ENCODE measurements at regions of chr1 and their contacts with region 1.

Region 1: DNA sequence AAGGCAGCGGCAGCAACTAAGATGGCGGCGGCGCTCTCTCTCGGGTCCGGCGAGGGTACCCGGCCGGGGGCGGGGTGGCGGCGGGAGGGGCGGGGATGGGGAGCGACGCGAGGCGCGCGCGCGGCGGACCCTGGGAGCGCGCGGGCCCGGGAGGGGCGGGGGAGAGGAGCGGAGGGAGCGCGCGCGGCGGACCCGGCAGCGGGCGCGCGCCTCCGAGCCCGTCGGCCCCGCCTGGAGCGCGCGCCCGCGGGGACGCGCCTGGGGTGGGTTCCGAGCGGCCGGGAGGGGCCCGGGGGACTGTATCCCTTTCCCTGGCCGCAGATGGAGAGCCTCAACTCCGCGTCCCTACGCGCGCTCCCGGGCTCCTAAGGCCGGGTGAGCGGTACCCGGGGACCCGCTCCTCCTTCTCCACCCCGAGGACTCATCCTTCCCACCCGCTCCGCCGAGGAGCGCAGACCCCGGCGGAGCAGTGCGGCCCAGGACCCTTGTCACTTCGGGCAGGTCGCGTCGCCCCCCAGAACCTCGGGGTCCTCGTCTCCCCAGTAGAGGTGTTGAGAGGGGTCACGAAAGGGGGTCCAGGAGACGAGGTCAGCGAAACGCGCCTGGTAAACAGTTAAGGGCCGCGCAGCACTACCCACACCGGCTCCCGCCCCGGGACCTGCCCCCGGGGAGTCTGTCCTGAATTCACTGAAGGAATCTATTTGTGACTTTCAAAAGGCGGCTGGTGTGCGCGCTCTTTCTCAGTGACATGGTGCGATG is at the start of gene CLSTN1:
- DNase-seq: peak; percentile 90
- ATAC-seq: peak; percentile 79
- H3K4me3 ChIP-seq: peak within 1 kb of the TSS; percentile 71 to 86 (median 77)
- H3K4me3 Mint-ChIP-seq: peak within 1 kb of the TSS; percentile 95
- H3K27ac ChIP-seq: peak within 1 kb of the TSS; percentile 47 to 73
- H3K27ac Mint-ChIP-seq: peak within 1 kb of the TSS; percentile 94
- H3K4me1 ChIP-seq: peaks cover 38 to 39% of the 10 kb centered on the region in 2 donors
- H3K4me1 Mint-ChIP-seq: peaks cover 41% of the 10 kb centered on the region
- H3K27me3 ChIP-seq: no peaks in the 10 kb centered on the region
- H3K27me3 Mint-ChIP-seq: no peaks in the 10 kb centered on the region
- CTCF ChIP-seq: no peak
- total RNA-seq, gene CLSTN1: 75.8 and 81.4 TPM in 2 replicates

Region 2: GRCh38 chr1:9539165-9539828 is 284.8 kb before region 1 on chr1 and contains the start of gene SLC25A33:
- CTCF ChIA-PET with region 1: no interaction called
- POLR2A ChIA-PET with region 1: no interaction called
- intact Hi-C with region 1: loop called (anchors 2 kb)
- DNase-seq: peak; percentile 99
- ATAC-seq: peak; percentile 97
- H3K4me3 ChIP-seq: peak within 1 kb of the TSS; percentile 24 to 80 (median 73)
- H3K4me3 Mint-ChIP-seq: peak within 1 kb of the TSS; percentile 97
- H3K27ac ChIP-seq: peak within 1 kb of the TSS; percentile 78 to 90
- H3K27ac Mint-ChIP-seq: peak within 1 kb of the TSS; percentile 98
- H3K4me1 ChIP-seq: peaks cover 12 to 16% of the 10 kb centered on the region in 2 donors
- H3K4me1 Mint-ChIP-seq: peaks cover 29% of the 10 kb centered on the region
- H3K27me3 ChIP-seq: no peaks in the 10 kb centered on the region
- H3K27me3 Mint-ChIP-seq: no peaks in the 10 kb centered on the region
- CTCF ChIP-seq: no peak
- total RNA-seq, gene SLC25A33: 5.0 and 5.9 TPM in 2 replicates

Region 3: GRCh38 chr1:9746211-9746610 is 77.9 kb before region 1 on chr1:
- CTCF ChIA-PET with region 1: no interaction called
- POLR2A ChIA-PET with region 1: no interaction called
- intact Hi-C with region 1: no loop called
- DNase-seq: no peak
- ATAC-seq: no peak
- H3K4me3 ChIP-seq: no peak overlapping the region
- H3K4me3 Mint-ChIP-seq: no peak overlapping the region
- H3K27ac ChIP-seq: no peak overlapping the region
- H3K27ac Mint-ChIP-seq: no peak overlapping the region
- H3K4me1 ChIP-seq: no peaks in the 10 kb centered on the region
- H3K4me1 Mint-ChIP-seq: no peaks in the 10 kb centered on the region
- H3K27me3 ChIP-seq: no peaks in the 10 kb centered on the region
- H3K27me3 Mint-ChIP-seq: no peaks in the 10 kb centered on the region
- CTCF ChIP-seq: no peak

Region 4: GRCh38 chr1:9842781-9843577 is 18.9 kb after region 1 on chr1:
- CTCF ChIA-PET with region 1: interaction called, 5 read pairs
- POLR2A ChIA-PET with region 1: interaction called, 11 read pairs
- intact Hi-C with region 1: no loop called
- DNase-seq: no peak
- ATAC-seq: no peak
- H3K4me3 ChIP-seq: no peak overlapping the region
- H3K4me3 Mint-ChIP-seq: no peak overlapping the region
- H3K27ac ChIP-seq: no peak overlapping the region
- H3K27ac Mint-ChIP-seq: no peak overlapping the region
- H3K4me1 ChIP-seq: peaks cover 0 to 3% of the 10 kb centered on the region in 2 donors
- H3K4me1 Mint-ChIP-seq: peaks cover 5% of the 10 kb centered on the region
- H3K27me3 ChIP-seq: no peaks in the 10 kb centered on the region
- H3K27me3 Mint-ChIP-seq: no peaks in the 10 kb centered on the region
- CTCF ChIP-seq: no peak

Region 5: GRCh38 chr1:9867408-9868243 is 43.5 kb after region 1 on chr1:
- CTCF ChIA-PET with region 1: interaction called, 4 read pairs
- POLR2A ChIA-PET with region 1: no interaction called
- intact Hi-C with region 1: loop called (anchors 5 kb)
- DNase-seq: peak; percentile 88
- ATAC-seq: peak; percentile 96
- H3K4me3 ChIP-seq: no peak overlapping the region
- H3K4me3 Mint-ChIP-seq: no peak overlapping the region
- H3K27ac ChIP-seq: no peak overlapping the region
- H3K27ac Mint-ChIP-seq: no peak overlapping the region
- H3K4me1 ChIP-seq: peaks cover 0 to 8% of the 10 kb centered on the region in 2 donors
- H3K4me1 Mint-ChIP-seq: peaks cover 3% of the 10 kb centered on the region
- H3K27me3 ChIP-seq: no peaks in the 10 kb centered on the region
- H3K27me3 Mint-ChIP-seq: no peaks in the 10 kb centered on the region
- CTCF ChIP-seq: peak; percentile 96